A549 (cell line): ENCODE measurements at regions of chr2 and their contacts with region 1.

Region 1: GRCh38 chr2:70871398-70872211 is 36.0 kb upstream of the CD207 start:
- DNase-seq: peak; percentile 84 to 88
- ATAC-seq: peak; percentile 97 to 99
- H3K4me3 ChIP-seq: peak overlapping the region; percentile 32
- H3K27ac ChIP-seq: no peak overlapping the region
- H3K4me1 ChIP-seq: peaks cover 5% of the 10 kb centered on the region; the same call in 2 of the 3 replicates
- CTCF ChIP-seq: peak; percentile 98
- EP300 ChIP-seq: no peak
- POLR2A ChIP-seq: no peak
- RAD21 ChIP-seq: peak; percentile 97 to 98

Region 2: DNA sequence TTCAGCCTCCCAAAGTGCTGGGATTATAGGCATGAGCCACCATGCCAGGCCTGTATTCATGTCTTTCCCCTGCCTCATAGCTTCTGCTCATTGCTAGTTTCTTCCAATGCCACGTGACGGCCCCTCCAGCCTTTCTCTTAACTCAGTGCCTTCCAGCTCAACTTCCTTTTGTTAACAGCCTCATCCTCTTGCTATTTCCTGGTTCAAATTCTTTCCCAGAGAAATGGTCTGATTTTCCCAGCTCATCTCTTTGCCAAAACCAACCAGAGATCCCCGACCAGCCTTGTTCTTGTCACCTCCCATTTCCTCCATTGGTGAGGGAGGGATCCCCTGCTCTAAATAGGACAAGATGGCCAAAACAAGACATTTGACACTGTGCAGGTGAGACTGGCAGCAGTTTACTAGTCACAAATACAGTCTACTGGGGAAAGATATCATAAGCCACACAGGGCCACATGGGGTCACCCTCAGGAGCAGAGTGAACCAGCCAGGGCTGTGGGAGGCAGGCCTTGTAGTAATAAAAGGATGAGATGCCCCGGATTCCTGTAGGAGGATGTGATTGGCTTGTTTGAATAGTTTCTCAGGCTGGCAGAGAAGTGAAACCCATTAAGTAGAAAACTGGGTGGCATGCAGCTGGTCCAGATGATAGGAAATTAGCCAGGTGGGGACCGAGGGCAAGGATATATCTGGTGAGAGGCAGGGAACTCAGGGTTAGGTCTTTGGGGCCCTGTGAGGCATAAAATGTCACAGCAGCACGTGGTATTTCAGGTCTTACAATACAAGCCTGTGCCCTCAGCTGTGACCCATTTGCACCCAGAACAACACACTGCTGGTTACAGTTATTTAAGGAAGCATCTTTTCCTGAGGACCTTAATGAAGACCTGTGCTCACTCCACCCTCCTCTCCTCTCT is 42.4 kb before region 1 on chr2:
- CTCF ChIA-PET with region 1: interaction called, 10 read pairs
- POLR2A ChIA-PET with region 1: no interaction called
- DNase-seq: no peak
- ATAC-seq: no peak
- H3K4me3 ChIP-seq: no peak overlapping the region
- H3K27ac ChIP-seq: no peak overlapping the region
- H3K4me1 ChIP-seq: no peaks in the 10 kb centered on the region
- CTCF ChIP-seq: no peak
- EP300 ChIP-seq: no peak
- POLR2A ChIP-seq: no peak
- RAD21 ChIP-seq: no peak

Region 3: GRCh38 chr2:70887550-70888246 is 16.1 kb after region 1 on chr2:
- CTCF ChIA-PET with region 1: interaction called, 25 read pairs
- POLR2A ChIA-PET with region 1: no interaction called
- DNase-seq: peak; percentile 36 to 74
- ATAC-seq: peak; percentile 75 to 85
- H3K4me3 ChIP-seq: peak overlapping the region; percentile 61
- H3K27ac ChIP-seq: peak overlapping the region; percentile 78 to 92
- H3K4me1 ChIP-seq: peaks cover 11% of the 10 kb centered on the region; the same call in 2 of the 3 replicates
- CTCF ChIP-seq: no peak
- EP300 ChIP-seq: no peak
- POLR2A ChIP-seq: peak; percentile 78
- RAD21 ChIP-seq: no peak

Region 4: GRCh38 chr2:70919672-70920366 is 48.2 kb after region 1 on chr2:
- CTCF ChIA-PET with region 1: interaction called, 400 read pairs
- POLR2A ChIA-PET with region 1: no interaction called
- DNase-seq: peak; percentile 77 to 87
- ATAC-seq: peak; percentile 90 to 95
- H3K4me3 ChIP-seq: no peak overlapping the region
- H3K27ac ChIP-seq: no peak overlapping the region
- H3K4me1 ChIP-seq: no peaks in the 10 kb centered on the region
- CTCF ChIP-seq: peak; percentile 97
- EP300 ChIP-seq: no peak
- POLR2A ChIP-seq: no peak
- RAD21 ChIP-seq: peak; percentile 81 to 89

Region 5: GRCh38 chr2:70964596-70965386 is 93.2 kb after region 1 on chr2:
- CTCF ChIA-PET with region 1: interaction called, 69 read pairs
- POLR2A ChIA-PET with region 1: no interaction called
- DNase-seq: peak; percentile 77 to 80
- ATAC-seq: peak; percentile 69 to 94
- H3K4me3 ChIP-seq: peak overlapping the region; percentile 51
- H3K27ac ChIP-seq: peak overlapping the region in 1 of 2 experiments; percentile 71; a peak in 3 of 6 replicates
- H3K4me1 ChIP-seq: no peaks in the 10 kb centered on the region
- CTCF ChIP-seq: peak; percentile 93
- EP300 ChIP-seq: no peak
- POLR2A ChIP-seq: no peak
- RAD21 ChIP-seq: peak; percentile 62 to 69

Region 6: DNA sequence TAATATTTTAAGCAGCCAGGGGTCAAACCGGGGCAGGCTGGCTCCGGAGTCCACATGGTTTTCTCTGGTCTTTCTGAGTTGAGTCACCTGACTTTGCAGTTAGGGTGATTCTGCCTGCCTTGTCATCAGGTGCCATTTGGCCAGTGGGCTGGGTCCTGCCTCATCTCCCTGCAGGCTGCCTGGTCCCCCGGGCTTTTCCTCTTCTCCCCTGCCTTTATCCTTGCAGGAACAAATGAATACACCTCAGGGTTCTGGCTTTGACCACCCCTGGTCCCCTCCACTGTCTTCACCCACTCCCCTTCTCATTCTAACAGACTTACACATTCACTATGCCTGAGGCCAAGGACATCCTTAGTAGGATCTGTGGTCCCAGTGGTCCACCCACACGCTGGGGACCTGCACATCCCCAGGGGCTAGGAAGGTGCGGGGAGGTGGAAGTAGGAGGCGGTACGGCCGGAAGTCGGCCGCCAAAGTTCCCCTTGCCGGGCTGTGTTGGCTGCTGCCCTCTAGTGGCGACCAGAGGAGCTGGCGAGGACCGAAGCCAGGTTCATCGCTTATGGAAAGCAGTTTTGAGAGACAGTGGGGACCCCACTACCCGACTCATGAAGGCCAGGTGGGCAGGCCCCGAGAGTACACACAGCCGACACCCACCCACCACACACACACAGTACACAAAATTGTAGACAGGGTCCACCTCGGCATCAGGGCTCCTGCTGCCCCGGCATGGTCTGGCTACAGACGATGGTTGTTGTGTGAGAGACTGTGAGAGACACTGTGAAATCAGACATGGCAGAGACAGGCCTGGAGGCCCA is 129.4 kb after region 1 on chr2:
- CTCF ChIA-PET with region 1: interaction called, 13 read pairs
- POLR2A ChIA-PET with region 1: no interaction called
- DNase-seq: peak; percentile 59 to 80
- ATAC-seq: peak; percentile 86 to 93
- H3K4me3 ChIP-seq: peak overlapping the region; percentile 42
- H3K27ac ChIP-seq: peak overlapping the region; percentile 64 to 83
- H3K4me1 ChIP-seq: peaks cover 5% of the 10 kb centered on the region; the same call in 1 of the 3 replicates
- CTCF ChIP-seq: peak; percentile 94
- EP300 ChIP-seq: no peak
- POLR2A ChIP-seq: peak; percentile 25; the same call in 1 of the 2 replicates
- RAD21 ChIP-seq: peak; percentile 41 to 43; a peak in 4 of 5 replicates

Region 7: GRCh38 chr2:71130113-71130904 is 258.7 kb after region 1 on chr2 and contains the starts of genes MCEE and MPHOSPH10:
- CTCF ChIA-PET with region 1: no interaction called
- POLR2A ChIA-PET with region 1: no interaction called
- DNase-seq: peak; percentile 86 to 94
- ATAC-seq: peak; percentile 97 to 99
- H3K4me3 ChIP-seq: peak within 1 kb of the TSS; percentile 83
- H3K27ac ChIP-seq: peak within 1 kb of the TSS; percentile 88 to 92
- H3K4me1 ChIP-seq: peaks cover 20% of the 10 kb centered on the region; the same call in 2 of the 3 replicates
- CTCF ChIP-seq: no peak
- EP300 ChIP-seq: no peak
- POLR2A ChIP-seq: peak; percentile 94
- RAD21 ChIP-seq: no peak
- polyA plus RNA-seq, gene MCEE: 15.8 and 17.7 TPM in 2 replicates
- polyA plus RNA-seq, gene MPHOSPH10: 25.9 and 51.7 TPM in 2 replicates